ENCODE measurements at regions of chr4 and their contacts with region 1.

Region 1: GRCh38 chr4:82428969-82429727 is 1.1 kb downstream of the HNRNPDL start:
- DNase-seq: peak; percentile 87 to 98 (median 94)
- ATAC-seq: peak; percentile 59
- H3K4me3 ChIP-seq: peak overlapping the region; percentile 93
- H3K4me3 Mint-ChIP-seq: peak overlapping the region; percentile 100
- H3K27ac ChIP-seq: peak overlapping the region; percentile 98 to 99
- H3K27ac Mint-ChIP-seq: peak overlapping the region; percentile 99
- H3K4me1 ChIP-seq: peaks cover 36% of the 10 kb centered on the region
- H3K4me1 Mint-ChIP-seq: peaks cover 84% of the 10 kb centered on the region
- H3K27me3 ChIP-seq: no peaks in the 10 kb centered on the region
- H3K27me3 Mint-ChIP-seq: peaks cover 4% of the 10 kb centered on the region
- CTCF ChIP-seq: peak; percentile 91

Region 2: GRCh38 chr4:82149750-82150149 is 279.4 kb before region 1 on chr4:
- CTCF ChIA-PET with region 1: no interaction called
- POLR2A ChIA-PET with region 1: no interaction called
- intact Hi-C with region 1: no loop called
- DNase-seq: no peak
- ATAC-seq: no peak
- H3K4me3 ChIP-seq: no peak overlapping the region
- H3K4me3 Mint-ChIP-seq: no peak overlapping the region
- H3K27ac ChIP-seq: no peak overlapping the region
- H3K27ac Mint-ChIP-seq: no peak overlapping the region
- H3K4me1 ChIP-seq: peaks cover 5% of the 10 kb centered on the region
- H3K4me1 Mint-ChIP-seq: peaks cover 19% of the 10 kb centered on the region
- H3K27me3 ChIP-seq: no peaks in the 10 kb centered on the region
- H3K27me3 Mint-ChIP-seq: no peaks in the 10 kb centered on the region
- CTCF ChIP-seq: no peak

Region 3: GRCh38 chr4:82230306-82230705 is 198.8 kb before region 1 on chr4:
- CTCF ChIA-PET with region 1: no interaction called
- POLR2A ChIA-PET with region 1: no interaction called
- intact Hi-C with region 1: no loop called
- DNase-seq: no peak
- ATAC-seq: no peak
- H3K4me3 ChIP-seq: no peak overlapping the region
- H3K4me3 Mint-ChIP-seq: no peak overlapping the region
- H3K27ac ChIP-seq: no peak overlapping the region
- H3K27ac Mint-ChIP-seq: no peak overlapping the region
- H3K4me1 ChIP-seq: no peaks in the 10 kb centered on the region
- H3K4me1 Mint-ChIP-seq: peaks cover under 1% of the 10 kb centered on the region
- H3K27me3 ChIP-seq: peaks cover 0 to 3% of the 10 kb centered on the region in 2 experiments
- H3K27me3 Mint-ChIP-seq: peaks cover 16% of the 10 kb centered on the region
- CTCF ChIP-seq: no peak

Region 4: DNA sequence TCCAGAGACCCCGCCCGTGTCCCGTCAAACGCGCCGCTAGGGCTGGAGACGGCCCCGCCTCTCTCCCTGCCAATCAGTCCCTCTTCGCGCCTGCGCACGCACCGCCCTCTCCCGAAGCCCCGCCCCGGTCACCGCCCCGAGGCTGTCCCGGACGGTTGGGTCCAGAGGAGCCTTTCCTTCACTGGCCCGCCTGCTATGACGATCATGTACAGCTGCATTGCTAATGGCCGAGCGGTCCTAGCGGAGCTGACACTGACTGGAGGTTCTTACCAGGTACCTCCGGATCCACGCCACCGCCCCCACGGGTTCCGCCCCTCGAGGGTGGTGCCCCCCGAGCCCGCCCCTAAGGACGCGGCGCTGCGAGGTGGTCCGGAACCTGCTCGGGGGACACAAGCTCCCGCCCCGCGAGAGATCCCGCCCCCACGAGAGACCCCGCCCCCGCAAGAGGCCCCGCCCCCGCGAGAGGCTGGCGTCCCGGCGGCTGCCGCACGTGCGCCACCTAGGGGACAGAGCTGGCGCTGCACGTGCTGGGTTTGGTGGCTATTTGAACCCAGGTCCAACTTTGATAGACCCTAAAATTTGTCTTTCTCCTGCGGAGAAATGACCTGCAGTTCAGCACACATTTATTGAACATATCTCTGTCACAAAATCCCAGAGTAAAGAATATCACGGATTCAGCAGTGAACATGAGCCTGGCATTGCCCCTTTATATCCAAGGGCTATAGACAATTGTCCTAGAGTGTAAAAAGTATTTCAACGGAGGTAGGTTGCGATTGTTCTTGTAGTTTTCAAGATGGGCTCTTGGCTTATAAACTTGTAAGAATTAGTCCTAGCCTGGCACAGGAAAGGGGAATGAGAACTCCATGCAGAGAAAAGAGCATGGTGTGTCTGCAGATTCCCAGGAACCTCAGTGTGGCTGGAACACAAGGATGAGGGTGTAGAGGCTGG is 144.0 kb before region 1 on chr4:
- CTCF ChIA-PET with region 1: interaction called, 13 read pairs
- POLR2A ChIA-PET with region 1: interaction called, 39 read pairs
- intact Hi-C with region 1: loop called (anchors 2 kb)
- DNase-seq: peak; percentile 98 to 100 (median 99)
- ATAC-seq: peak; percentile 88
- H3K4me3 ChIP-seq: peak overlapping the region; percentile 57
- H3K4me3 Mint-ChIP-seq: peak overlapping the region; percentile 85
- H3K27ac ChIP-seq: peak overlapping the region in 1 of 2 donors; percentile 69
- H3K27ac Mint-ChIP-seq: peak overlapping the region; percentile 80
- H3K4me1 ChIP-seq: peaks cover 12% of the 10 kb centered on the region
- H3K4me1 Mint-ChIP-seq: peaks cover 19% of the 10 kb centered on the region
- H3K27me3 ChIP-seq: no peaks in the 10 kb centered on the region
- H3K27me3 Mint-ChIP-seq: no peaks in the 10 kb centered on the region
- CTCF ChIP-seq: peak; percentile 96

Region 5: DNA sequence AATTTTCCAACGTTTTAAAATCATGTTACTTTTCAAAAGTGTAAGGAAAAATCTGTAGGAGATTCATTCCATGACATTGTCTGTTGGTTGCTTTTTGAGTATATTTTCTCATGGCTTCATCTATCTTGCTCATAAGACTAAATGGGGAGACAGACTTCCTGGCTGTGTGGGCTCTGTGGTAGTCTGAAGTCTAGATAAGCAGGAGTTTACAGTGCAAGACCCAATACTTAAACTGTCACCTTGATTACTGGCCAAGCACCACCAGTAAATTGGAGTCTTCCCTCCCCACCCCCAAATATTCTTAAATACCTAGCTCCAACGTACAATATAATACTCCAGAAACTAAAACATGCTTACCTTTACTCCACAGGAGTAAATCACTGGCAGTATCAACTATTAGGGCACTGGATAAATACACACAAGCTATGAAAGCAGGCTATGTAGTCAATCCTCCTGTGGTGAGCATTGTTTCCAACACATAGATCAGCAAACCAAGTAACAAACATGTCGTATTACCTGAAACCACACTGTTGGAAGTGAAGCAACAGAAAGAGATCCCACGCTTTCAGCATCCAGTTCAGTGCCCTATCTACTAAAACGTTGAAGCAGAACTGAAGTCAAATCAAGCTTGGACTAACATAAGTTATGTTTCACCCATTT is 61.6 kb before region 1 on chr4:
- CTCF ChIA-PET with region 1: interaction called, 28 read pairs
- POLR2A ChIA-PET with region 1: interaction called, 277 read pairs
- intact Hi-C with region 1: no loop called
- DNase-seq: peak in 1 of 14 experiments; percentile 41
- ATAC-seq: peak; percentile 56
- H3K4me3 ChIP-seq: no peak overlapping the region
- H3K4me3 Mint-ChIP-seq: peak overlapping the region; percentile 77
- H3K27ac ChIP-seq: no peak overlapping the region
- H3K27ac Mint-ChIP-seq: peak overlapping the region; percentile 65
- H3K4me1 ChIP-seq: peaks cover 47% of the 10 kb centered on the region
- H3K4me1 Mint-ChIP-seq: peaks cover 92% of the 10 kb centered on the region
- H3K27me3 ChIP-seq: no peaks in the 10 kb centered on the region
- H3K27me3 Mint-ChIP-seq: no peaks in the 10 kb centered on the region
- CTCF ChIP-seq: no peak

Region 6: DNA sequence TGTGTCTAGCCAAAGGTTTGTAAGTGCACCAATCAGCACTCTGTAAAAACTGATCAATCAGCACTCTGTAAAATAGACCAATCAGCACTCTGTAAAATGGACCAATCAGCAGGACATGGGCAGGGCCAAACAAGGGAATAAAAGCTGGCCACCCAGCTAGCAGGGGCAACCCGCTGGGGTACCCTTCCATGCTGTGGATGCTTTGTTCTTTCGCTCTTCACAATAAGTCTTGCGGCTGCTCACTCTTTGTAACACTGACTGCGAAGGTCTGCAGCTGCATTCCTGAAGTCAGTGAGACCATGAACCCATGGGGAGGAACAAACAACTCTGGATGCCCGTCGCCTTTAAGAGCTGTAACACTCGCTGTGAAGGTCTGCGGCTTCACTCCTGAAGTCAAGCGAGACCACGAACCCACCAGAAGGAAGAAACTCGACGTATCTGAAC is 13.2 kb before region 1 on chr4:
- CTCF ChIA-PET with region 1: interaction called, 8 read pairs
- POLR2A ChIA-PET with region 1: interaction called, 30 read pairs
- intact Hi-C with region 1: no loop called
- DNase-seq: no peak
- ATAC-seq: no peak
- H3K4me3 ChIP-seq: no peak overlapping the region
- H3K4me3 Mint-ChIP-seq: no peak overlapping the region
- H3K27ac ChIP-seq: no peak overlapping the region
- H3K27ac Mint-ChIP-seq: no peak overlapping the region
- H3K4me1 ChIP-seq: no peaks in the 10 kb centered on the region
- H3K4me1 Mint-ChIP-seq: no peaks in the 10 kb centered on the region
- H3K27me3 ChIP-seq: peaks cover 0 to 8% of the 10 kb centered on the region in 2 experiments
- H3K27me3 Mint-ChIP-seq: peaks cover 21% of the 10 kb centered on the region
- CTCF ChIP-seq: no peak

Region 7: GRCh38 chr4:82661181-82661992 is 232.2 kb after region 1 on chr4:
- CTCF ChIA-PET with region 1: no interaction called
- POLR2A ChIA-PET with region 1: no interaction called
- intact Hi-C with region 1: no loop called
- DNase-seq: no peak
- ATAC-seq: no peak
- H3K4me3 ChIP-seq: no peak overlapping the region
- H3K4me3 Mint-ChIP-seq: no peak overlapping the region
- H3K27ac ChIP-seq: no peak overlapping the region
- H3K27ac Mint-ChIP-seq: no peak overlapping the region
- H3K4me1 ChIP-seq: no peaks in the 10 kb centered on the region
- H3K4me1 Mint-ChIP-seq: no peaks in the 10 kb centered on the region
- H3K27me3 ChIP-seq: peaks cover 0 to 9% of the 10 kb centered on the region in 2 experiments
- H3K27me3 Mint-ChIP-seq: peaks cover 37% of the 10 kb centered on the region
- CTCF ChIP-seq: no peak

Region 8: DNA sequence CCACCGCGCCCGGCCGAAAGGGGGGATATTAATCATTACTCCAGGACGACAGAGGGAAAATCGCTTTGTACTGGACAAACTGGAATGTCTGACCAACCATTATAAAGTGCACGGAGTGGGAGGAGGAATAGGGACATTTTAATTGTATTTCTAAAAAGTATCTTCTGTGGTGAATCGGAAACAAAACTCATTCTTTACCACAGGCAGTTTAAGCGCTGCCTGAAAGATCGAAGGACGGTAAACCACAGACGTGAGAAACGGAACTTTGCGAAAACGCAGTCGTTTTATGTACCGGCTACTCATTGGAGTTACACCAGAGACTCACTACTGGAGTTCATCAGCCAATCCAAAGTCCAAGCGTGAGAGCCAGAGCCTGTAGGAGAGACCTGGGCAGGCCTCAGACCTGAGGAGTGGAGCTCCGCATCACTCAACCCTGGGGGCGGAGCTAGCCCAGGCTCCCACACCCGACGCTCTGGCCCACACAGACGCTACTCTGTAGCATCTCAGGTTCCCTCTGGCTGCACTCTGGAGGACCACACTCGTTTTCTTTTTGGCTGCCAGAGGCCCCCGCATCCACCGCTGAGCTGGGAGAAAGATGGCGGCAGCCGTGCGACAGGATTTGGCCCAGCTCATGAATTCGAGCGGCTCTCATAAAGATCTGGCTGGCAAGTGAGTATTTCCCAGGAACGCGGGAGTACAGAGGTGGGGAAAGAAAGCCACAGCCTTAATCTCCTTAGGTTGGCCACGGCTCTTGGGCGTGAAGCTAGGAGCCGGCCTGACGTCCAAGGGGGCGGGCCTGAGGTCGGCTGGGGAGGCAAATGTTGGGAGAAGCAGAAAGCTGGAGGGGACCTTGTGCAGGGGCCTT is 605.7 kb after region 1 on chr4 and contains the start of gene COPS4:
- CTCF ChIA-PET with region 1: interaction called, 3 read pairs
- POLR2A ChIA-PET with region 1: interaction called, 26 read pairs
- intact Hi-C with region 1: loop called in 1 of 2 experiments (anchors 5 kb)
- DNase-seq: peak; percentile 86 to 100 (median 92)
- ATAC-seq: peak; percentile 95
- H3K4me3 ChIP-seq: peak within 1 kb of the TSS; percentile 83
- H3K4me3 Mint-ChIP-seq: peak within 1 kb of the TSS; percentile 99
- H3K27ac ChIP-seq: peak within 1 kb of the TSS; percentile 84
- H3K27ac Mint-ChIP-seq: peak within 1 kb of the TSS; percentile 90
- H3K4me1 ChIP-seq: peaks cover 28% of the 10 kb centered on the region
- H3K4me1 Mint-ChIP-seq: peaks cover 41% of the 10 kb centered on the region
- H3K27me3 ChIP-seq: no peaks in the 10 kb centered on the region
- H3K27me3 Mint-ChIP-seq: no peaks in the 10 kb centered on the region
- CTCF ChIP-seq: no peak
- total RNA-seq, gene COPS4: 26.0 to 27.6 TPM

Region 9: DNA sequence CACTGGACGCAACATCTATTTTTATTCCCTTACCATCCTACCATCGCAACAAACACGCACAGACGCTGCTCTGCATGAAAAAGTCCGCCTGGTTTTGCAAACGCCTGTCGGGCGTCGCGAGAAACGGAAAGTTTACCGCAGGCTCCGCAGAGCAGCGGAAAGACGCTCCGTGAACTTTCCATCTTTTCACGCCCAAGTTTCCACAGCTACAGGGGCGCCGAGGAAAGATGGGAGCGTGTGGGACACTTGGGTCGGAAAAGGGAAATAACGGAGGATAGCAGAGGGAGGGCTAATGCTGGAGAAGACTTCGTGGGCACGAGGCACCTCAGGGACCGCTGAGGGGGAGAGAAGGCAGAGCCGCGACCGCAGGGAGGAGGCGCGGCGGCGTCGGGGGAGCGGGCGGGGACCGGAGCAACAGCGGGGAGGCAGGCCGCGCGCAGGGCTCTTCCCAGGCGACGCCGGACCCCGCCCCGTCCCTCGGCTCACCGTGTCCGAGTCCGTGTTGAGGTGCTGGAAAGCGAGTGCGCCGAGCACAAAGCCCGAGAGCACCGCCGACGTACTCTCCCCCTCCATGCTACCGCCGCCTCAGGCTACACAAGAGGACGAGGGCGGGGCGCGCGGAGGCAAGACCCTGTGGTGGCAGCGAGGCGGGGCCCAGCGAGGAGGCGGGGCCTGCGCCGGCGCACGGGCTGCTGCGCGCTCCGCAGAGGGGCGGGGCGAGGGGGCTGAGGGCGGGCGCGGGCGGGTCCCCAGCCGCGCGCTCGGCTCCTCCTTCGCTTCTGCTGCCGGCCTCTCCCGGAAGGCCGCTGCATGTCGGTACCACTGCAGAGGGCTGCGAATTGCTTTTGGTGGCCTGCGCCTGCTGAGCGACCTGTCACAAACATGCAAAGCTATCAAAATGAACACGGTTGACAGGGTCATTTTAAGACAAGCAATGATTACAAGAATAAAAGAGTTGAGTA is 1055.6 kb after region 1 on chr4 and contains the start of gene ABRAXAS1:
- CTCF ChIA-PET with region 1: no interaction called
- POLR2A ChIA-PET with region 1: interaction called, 4 read pairs
- intact Hi-C with region 1: loop called in 1 of 2 experiments (anchors 10 kb)
- DNase-seq: peak; percentile 87 to 99 (median 94)
- ATAC-seq: peak; percentile 91
- H3K4me3 ChIP-seq: peak within 1 kb of the TSS; percentile 71
- H3K4me3 Mint-ChIP-seq: peak within 1 kb of the TSS; percentile 94
- H3K27ac ChIP-seq: peak within 1 kb of the TSS; percentile 47 to 71
- H3K27ac Mint-ChIP-seq: peak within 1 kb of the TSS; percentile 92
- H3K4me1 ChIP-seq: peaks cover 17% of the 10 kb centered on the region
- H3K4me1 Mint-ChIP-seq: peaks cover 32% of the 10 kb centered on the region
- H3K27me3 ChIP-seq: no peaks in the 10 kb centered on the region
- H3K27me3 Mint-ChIP-seq: no peaks in the 10 kb centered on the region
- CTCF ChIP-seq: no peak
- total RNA-seq, gene ABRAXAS1: 19.3 to 19.5 TPM

Measured in CD4-positive, alpha-beta T cell (primary cell).